ENCODE measurements at regions of chr2 and their contacts with region 1.

Region 1: DNA sequence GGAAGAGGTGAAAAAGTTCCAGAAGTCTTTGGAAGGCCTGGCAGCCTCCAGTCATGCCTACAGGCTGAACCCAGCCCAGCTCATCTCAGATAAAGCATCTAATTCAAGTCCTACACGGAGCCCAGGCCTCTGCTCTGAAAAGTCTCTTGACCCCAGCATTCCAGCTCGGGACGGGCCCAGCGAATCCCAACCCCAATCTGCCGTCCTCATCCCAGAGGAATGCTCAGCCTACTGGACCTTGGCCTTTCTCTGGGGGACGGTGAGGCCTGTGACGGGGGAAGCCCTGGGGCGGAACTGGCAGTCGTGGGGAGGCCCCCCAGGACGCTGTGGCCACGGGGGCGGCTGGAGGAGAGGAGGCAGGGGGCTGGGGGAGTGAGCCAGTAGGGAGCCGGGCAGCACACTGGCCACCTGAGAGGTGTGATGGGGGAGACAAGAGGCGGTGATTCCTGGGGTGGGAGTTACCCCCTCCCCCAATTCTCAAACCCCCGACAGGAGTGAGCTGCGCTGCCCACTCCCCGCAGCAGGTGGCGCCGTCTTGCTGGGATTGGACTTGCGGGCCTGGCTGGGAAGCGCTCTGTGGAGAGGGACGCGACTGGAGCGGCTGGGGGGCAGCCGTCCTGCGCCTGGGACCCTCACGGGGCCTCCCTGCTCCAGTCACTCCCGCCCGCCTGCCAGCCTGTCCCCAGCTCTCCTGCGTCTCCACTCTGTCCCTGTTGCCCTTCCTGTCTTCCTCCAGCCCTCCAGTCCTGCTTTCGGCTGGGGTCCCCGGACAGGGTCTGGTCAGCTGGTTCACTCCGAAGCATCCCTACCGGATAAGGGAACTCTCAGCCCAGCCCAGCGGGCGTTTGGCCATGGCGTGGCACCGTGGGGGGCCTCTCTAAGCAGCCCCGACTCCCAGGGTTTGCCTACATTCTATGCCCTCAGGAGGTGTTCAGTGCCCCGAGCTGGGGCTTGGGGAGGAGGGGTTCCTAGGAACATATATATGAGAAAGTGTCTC is 182.6 kb upstream of the HAAO start:
- DNase-seq: peak in 1 of 2 experiments; percentile 76
- H3K4me3 ChIP-seq: no peak overlapping the region
- H3K27ac ChIP-seq: no peak overlapping the region
- H3K4me1 ChIP-seq: peaks cover 16% of the 10 kb centered on the region
- H3K27me3 ChIP-seq: no peaks in the 10 kb centered on the region
- CTCF ChIP-seq: peak; percentile 97

Region 2: GRCh38 chr2:42813024-42813423 is 162.0 kb before region 1 on chr2:
- CTCF ChIA-PET with region 1: no interaction called
- POLR2A ChIA-PET with region 1: no interaction called
- intact Hi-C with region 1: no loop called
- DNase-seq: no peak
- H3K4me3 ChIP-seq: no peak overlapping the region
- H3K27ac ChIP-seq: no peak overlapping the region
- H3K4me1 ChIP-seq: peaks cover 9% of the 10 kb centered on the region
- H3K27me3 ChIP-seq: no peaks in the 10 kb centered on the region
- CTCF ChIP-seq: peak; percentile 84

Region 3: DNA sequence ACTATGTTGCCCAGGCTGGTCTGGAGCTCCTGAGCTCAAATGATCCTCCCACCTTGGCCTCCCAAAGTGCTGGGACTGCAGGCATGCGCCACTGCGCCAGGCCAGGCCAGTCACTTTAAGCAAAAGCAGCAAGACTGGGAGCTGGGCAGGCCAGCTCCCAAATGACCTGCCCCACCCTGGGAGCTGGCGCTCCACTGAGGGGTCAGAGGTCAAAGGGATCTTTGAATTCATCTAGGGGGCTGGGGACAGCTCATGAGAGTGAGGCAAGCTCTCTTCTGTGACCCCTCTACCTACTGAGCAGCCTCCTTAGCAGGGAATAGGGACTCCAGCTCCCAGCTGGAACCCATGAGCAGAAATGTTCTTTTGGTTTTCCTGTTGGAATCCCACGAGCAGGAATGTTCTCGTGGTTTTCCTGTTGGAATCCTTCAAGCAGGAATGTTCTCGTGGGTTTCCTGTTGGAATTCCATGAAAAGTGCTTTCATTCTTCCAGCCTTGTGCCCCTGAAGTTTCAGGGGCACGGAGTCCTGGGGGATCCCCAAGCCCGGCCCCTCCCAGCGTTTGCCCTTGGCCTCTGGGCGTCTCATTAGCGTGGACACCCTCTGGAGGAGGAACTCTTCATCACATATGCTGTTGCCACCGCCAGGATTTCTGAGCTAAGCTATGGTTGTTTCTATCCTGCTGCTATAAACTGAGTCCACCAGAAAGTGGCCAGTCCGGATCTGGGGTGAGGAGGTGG is 20.6 kb before region 1 on chr2:
- CTCF ChIA-PET with region 1: interaction called, 3 read pairs
- POLR2A ChIA-PET with region 1: interaction called, 16 read pairs
- intact Hi-C with region 1: no loop called
- DNase-seq: no peak
- H3K4me3 ChIP-seq: no peak overlapping the region
- H3K27ac ChIP-seq: no peak overlapping the region
- H3K4me1 ChIP-seq: peaks cover 59% of the 10 kb centered on the region
- H3K27me3 ChIP-seq: no peaks in the 10 kb centered on the region
- CTCF ChIP-seq: no peak

Region 4: DNA sequence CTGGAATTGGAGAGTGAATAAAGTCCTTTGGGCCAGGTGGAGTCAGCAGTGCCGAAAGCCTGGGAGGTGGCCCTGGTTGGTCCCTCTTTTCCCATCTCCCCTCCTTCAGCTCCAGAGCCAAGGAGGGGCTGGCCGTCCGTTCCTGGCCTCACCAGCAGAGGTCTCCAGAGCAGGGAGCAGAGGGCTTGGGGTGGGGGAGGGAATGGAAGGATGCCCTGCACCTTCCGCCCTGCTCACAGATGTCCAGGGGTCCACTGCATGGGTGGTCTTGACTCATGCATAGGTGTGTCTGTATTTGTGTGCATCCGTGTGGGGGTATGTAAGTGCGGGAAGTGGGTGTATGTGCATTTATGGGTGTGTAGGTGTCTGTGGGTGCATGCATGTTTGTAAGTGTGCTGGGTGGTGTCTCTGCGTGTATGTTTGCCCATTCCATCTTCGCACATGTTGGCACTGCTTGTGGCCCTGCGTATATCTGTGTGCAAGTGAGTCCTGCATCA is 49.5 kb after region 1 on chr2:
- CTCF ChIA-PET with region 1: no interaction called
- POLR2A ChIA-PET with region 1: no interaction called
- intact Hi-C with region 1: loop called (anchors 5 kb)
- DNase-seq: peak in 1 of 2 experiments; percentile 67
- H3K4me3 ChIP-seq: no peak overlapping the region
- H3K27ac ChIP-seq: no peak overlapping the region
- H3K4me1 ChIP-seq: peaks cover 19% of the 10 kb centered on the region; the same call in 1 of the 2 replicates
- H3K27me3 ChIP-seq: no peaks in the 10 kb centered on the region
- CTCF ChIP-seq: peak; percentile 90

Region 5: DNA sequence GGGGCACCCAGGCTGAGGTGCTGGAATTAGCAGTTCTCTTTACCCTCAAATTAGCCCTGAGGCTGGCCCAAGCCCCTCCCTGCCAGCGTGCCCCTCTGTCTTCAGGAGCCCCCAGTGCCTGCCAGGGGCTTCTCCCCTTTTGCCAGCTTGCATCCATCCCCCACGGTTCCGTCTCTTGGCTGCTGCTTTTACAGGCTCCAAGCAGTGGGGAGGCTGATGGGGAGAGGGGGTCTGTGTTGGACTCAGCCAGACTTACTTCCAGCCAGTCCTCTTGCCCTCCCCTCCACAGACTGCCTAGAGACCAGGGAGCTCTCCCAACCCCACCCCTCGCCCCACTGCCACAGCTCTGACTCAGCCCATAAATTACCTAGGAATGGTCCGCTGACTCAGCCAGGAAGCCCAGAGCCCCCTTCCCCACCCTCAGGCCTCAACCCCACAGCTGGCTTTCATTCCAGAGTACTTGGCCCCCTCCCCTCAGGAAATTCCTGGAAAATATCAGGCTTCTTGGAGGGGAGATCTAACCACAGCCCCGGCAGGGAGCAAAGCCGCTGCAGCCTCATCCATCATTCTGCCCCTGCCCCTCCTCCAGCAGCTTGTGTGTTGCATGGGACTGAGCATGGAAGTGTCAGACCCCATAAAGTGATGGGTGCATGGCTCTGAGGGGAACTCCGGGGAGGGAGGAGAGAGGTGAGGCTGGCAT is 66.8 kb after region 1 on chr2:
- CTCF ChIA-PET with region 1: interaction called, 13 read pairs
- POLR2A ChIA-PET with region 1: no interaction called
- intact Hi-C with region 1: no loop called
- DNase-seq: peak; percentile 93 to 95
- H3K4me3 ChIP-seq: peak overlapping the region; percentile 19; the same call in 1 of the 2 replicates
- H3K27ac ChIP-seq: peak overlapping the region; percentile 90
- H3K4me1 ChIP-seq: peaks cover 79% of the 10 kb centered on the region
- H3K27me3 ChIP-seq: no peaks in the 10 kb centered on the region
- CTCF ChIP-seq: no peak

Region 6: GRCh38 chr2:43059183-43059897 is 84.3 kb after region 1 on chr2:
- CTCF ChIA-PET with region 1: no interaction called
- POLR2A ChIA-PET with region 1: no interaction called
- intact Hi-C with region 1: no loop called
- DNase-seq: peak in 1 of 2 experiments; percentile 51
- H3K4me3 ChIP-seq: no peak overlapping the region
- H3K27ac ChIP-seq: no peak overlapping the region
- H3K4me1 ChIP-seq: peaks cover 23% of the 10 kb centered on the region
- H3K27me3 ChIP-seq: no peaks in the 10 kb centered on the region
- CTCF ChIP-seq: no peak

Region 7: GRCh38 chr2:43083710-43084698 is 109.0 kb after region 1 on chr2:
- CTCF ChIA-PET with region 1: no interaction called
- POLR2A ChIA-PET with region 1: no interaction called
- intact Hi-C with region 1: no loop called
- DNase-seq: no peak
- H3K4me3 ChIP-seq: no peak overlapping the region
- H3K27ac ChIP-seq: no peak overlapping the region
- H3K4me1 ChIP-seq: peaks cover 69% of the 10 kb centered on the region
- H3K27me3 ChIP-seq: no peaks in the 10 kb centered on the region
- CTCF ChIP-seq: no peak

Region 8: GRCh38 chr2:43169987-43170386 is 195.0 kb after region 1 on chr2:
- CTCF ChIA-PET with region 1: no interaction called
- POLR2A ChIA-PET with region 1: no interaction called
- intact Hi-C with region 1: loop called (anchors 1 kb)
- DNase-seq: peak; percentile 38 to 50
- H3K4me3 ChIP-seq: peak overlapping the region; percentile 53; the same call in 1 of the 2 replicates
- H3K27ac ChIP-seq: peak overlapping the region; percentile 97
- H3K4me1 ChIP-seq: peaks cover 74% of the 10 kb centered on the region
- H3K27me3 ChIP-seq: no peaks in the 10 kb centered on the region
- CTCF ChIP-seq: peak; percentile 96

Region 9: GRCh38 chr2:43269074-43269572 is 294.1 kb after region 1 on chr2:
- CTCF ChIA-PET with region 1: no interaction called
- POLR2A ChIA-PET with region 1: no interaction called
- intact Hi-C with region 1: no loop called
- DNase-seq: peak; percentile 32 to 59
- H3K4me3 ChIP-seq: no peak overlapping the region
- H3K27ac ChIP-seq: no peak overlapping the region
- H3K4me1 ChIP-seq: no peaks in the 10 kb centered on the region
- H3K27me3 ChIP-seq: no peaks in the 10 kb centered on the region
- CTCF ChIP-seq: no peak